ENCODE measurements at regions of chr12 and their contacts with region 1.

Region 1: DNA sequence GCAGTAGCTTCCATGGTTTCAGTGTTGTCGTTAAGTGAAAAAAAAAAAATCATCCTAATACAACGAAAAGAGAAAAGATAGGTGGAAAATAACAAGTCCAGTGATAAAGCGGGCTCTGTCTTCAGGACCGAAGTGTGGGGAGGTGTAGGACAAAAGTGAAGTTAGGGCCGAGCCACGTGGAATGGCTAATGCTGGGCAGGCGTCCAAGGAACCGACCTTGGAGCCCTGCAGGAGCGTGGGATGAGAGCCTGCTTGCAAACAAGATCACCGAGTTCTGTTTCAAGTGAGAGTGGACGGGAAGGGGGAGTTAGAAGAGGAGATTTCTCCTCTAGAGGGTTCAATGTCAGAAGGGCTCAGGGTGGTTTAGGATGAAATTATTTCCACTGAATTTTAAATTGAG is 22.2 kb downstream of the A2ML1 start:
- DNase-seq: no peak
- H3K4me3 ChIP-seq: no peak overlapping the region
- H3K27ac ChIP-seq: no peak overlapping the region
- H3K4me1 ChIP-seq: peaks cover 0 to 4% (median 0%) of the 10 kb centered on the region in 4 donors
- H3K27me3 ChIP-seq: no peaks in the 10 kb centered on the region
- CTCF ChIP-seq: no peak

Region 2: GRCh38 chr12:8609061-8609570 is 235.5 kb before region 1 on chr12:
- intact Hi-C with region 1: no loop called
- DNase-seq: no peak
- H3K4me3 ChIP-seq: no peak overlapping the region
- H3K27ac ChIP-seq: no peak overlapping the region
- H3K4me1 ChIP-seq: peaks cover 0 to 3% (median 0%) of the 10 kb centered on the region in 4 donors
- H3K27me3 ChIP-seq: no peaks in the 10 kb centered on the region
- CTCF ChIP-seq: peak; percentile 48 to 60

Region 3: DNA sequence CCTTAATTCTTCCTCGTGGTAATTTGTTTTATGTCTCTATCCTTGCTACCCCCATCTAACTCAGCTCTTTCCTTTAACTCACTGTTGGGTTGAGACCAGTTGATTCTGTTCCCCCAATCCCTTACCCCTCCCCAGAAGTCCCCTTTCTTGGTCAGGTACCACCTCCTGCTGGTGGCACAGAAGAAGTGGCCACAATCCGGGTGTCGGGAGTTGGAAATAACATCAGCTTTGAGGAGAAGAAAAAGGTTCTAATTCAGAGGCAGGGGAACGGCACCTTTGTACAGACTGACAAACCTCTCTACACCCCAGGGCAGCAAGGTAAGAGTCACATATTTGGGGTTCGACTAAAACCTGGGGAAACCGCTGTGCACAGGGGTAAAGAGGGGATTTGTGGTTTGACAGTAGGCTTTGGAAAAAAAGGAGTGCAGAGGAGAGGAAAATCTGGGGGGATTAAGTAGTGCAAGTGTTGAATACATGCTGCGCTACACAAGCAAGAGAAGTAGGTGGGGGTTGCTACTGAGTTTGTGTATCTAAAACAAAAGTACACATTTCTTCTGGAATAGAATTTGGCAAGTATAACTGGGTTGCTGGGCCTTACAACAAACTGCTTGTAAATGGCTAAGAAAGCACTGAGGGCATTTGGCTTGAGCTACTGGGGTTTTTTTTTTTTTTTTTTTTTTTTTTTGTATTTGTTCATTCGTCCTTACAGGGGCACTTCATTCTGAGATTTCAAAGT is 20.9 kb before region 1 on chr12:
- intact Hi-C with region 1: no loop called
- DNase-seq: no peak
- H3K4me3 ChIP-seq: no peak overlapping the region
- H3K27ac ChIP-seq: no peak overlapping the region
- H3K4me1 ChIP-seq: peaks cover 0 to 7% (median 0%) of the 10 kb centered on the region in 4 donors
- H3K27me3 ChIP-seq: no peaks in the 10 kb centered on the region
- CTCF ChIP-seq: peak; percentile 77 to 78

Region 4: DNA sequence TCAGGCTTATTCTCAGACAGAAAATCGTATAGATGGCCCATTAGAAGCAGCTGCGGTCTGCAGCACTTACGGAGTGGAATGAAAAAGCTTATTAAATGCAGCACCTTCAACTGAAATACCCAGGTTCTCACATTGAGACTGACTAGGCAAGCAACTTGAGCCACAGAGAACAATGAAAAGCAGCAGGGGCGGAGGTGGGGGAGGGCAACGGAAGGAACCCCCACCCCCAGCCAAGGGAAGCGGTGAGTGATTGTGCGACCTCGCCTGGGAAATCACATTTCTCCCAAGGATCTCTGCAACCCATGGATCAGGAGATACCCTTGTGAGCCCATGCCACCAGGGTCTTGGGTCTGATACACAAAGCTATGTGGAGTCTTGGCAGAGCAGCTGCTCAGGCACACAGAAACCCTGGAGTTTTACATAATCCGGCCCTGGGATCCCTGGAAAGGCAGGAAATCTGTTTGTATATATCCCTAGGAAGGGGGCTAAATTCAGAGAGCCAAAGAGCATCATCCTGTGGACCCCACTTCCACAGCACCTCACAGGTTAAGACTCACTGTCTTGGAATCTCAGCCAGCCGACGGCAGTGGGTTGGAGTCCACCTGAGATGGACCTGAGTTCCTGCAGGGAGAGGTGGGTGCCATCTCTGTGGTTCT is 325.4 kb after region 1 on chr12:
- intact Hi-C with region 1: loop called (anchors 5 kb)
- DNase-seq: no peak
- H3K4me3 ChIP-seq: no peak overlapping the region
- H3K27ac ChIP-seq: no peak overlapping the region
- H3K4me1 ChIP-seq: no peaks in the 10 kb centered on the region
- H3K27me3 ChIP-seq: no peaks in the 10 kb centered on the region
- CTCF ChIP-seq: no peak

Measured in tibial artery (tissue), 4 donors.